Ascending aorta (tissue), 2 donors: ENCODE measurements at regions of chr5 and their contacts with region 1.

Region 1: GRCh38 chr5:110001648-110002047 is 311.9 kb downstream of the MAN2A1 start:
- DNase-seq: no peak
- H3K4me3 ChIP-seq: no peak overlapping the region
- H3K27ac ChIP-seq: peak overlapping the region; percentile 65 to 72
- H3K4me1 ChIP-seq: peaks cover 7 to 37% of the 10 kb centered on the region in 2 donors
- H3K27me3 ChIP-seq: no peaks in the 10 kb centered on the region
- CTCF ChIP-seq: no peak

Region 2: DNA sequence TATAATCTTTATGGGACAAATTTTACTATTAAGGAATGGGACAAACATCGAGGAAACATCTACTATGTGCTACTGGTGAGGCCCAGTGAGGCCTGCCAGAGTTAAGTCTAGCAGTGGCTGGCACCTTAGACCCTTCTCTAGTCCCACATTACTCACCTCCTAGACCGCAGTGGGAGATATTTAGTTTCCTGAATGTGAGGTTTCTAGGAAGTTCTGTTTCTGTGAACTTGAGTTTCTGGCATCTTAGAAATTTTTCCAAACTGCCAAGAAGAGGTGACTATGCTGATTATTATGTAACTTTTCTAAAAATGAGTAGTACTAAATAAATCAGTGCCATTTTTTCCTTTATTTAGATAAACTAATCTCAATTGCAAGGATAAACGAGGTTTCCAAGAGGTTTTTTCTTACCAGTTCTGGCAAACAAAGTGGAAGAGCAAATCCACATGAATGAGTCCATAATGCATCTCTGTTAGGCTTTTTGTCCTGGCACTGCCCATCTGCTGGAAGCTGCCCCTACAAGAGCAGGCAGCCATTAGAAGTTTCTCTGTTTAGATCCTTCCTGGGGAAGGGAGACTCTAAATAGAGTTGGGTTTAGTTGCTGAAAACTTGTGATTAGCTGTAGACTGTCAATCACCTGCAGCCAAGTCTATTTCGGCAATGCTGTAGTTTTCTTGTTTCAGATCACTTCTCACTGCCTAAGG is 36.8 kb after region 1 on chr5:
- intact Hi-C with region 1: loop called (anchors 2 kb)
- DNase-seq: peak; percentile 16 to 73
- H3K4me3 ChIP-seq: no peak overlapping the region
- H3K27ac ChIP-seq: peak overlapping the region; percentile 45 to 62
- H3K4me1 ChIP-seq: peaks cover 0 to 5% of the 10 kb centered on the region in 2 donors
- H3K27me3 ChIP-seq: no peaks in the 10 kb centered on the region
- CTCF ChIP-seq: no peak

Region 3: GRCh38 chr5:110105692-110106091 is 104.0 kb after region 1 on chr5:
- intact Hi-C with region 1: loop called (anchors 5 kb)
- DNase-seq: peak; percentile 25 to 84
- H3K4me3 ChIP-seq: no peak overlapping the region
- H3K27ac ChIP-seq: no peak overlapping the region
- H3K4me1 ChIP-seq: peaks cover 0 to 16% of the 10 kb centered on the region in 2 donors
- H3K27me3 ChIP-seq: no peaks in the 10 kb centered on the region
- CTCF ChIP-seq: no peak